ENCODE measurements at regions of chr3 and their contacts with region 1.

Region 1: DNA sequence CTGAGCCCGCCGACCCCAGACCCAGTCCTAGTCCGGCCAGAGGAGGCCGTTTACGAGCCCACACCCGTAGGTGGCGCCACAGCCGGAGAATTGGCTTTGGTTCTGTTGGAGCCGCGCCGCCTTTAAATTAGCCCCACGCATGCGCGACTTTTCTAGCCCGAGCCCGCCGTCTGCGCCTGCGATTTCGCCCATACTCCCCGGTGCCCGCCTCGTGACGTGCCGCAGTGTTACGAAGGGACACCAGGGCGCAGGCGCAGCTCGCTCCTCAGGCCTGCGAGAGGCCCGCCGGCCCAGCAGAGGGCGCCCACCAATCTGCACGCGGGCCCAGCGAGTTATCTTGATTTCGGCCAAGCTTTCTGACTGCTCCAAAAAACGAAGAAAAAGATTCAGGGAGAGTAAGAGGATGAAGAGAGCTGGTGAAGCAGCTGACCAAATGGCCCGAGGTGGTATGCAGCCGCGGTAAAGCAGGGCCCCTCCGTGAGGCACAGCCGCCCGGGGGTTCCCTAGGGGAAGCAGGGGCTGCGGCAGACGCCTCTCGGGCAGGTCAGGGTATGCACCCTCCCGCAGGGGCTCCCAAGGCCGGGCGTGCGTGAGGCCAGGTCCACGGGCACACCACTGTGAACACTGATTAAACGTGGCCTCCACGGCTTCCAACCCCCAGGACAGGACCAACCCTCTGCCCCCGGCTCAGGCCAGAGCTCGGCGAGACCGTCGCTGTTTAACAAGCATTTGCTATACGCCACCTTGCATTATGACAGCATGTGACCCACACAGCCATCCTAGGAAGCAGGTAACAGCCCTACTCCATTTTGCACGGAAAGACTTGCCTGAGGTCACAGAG is 32.8 kb downstream of the RPN1 start:
- DNase-seq: peak; percentile 84 to 99
- H3K4me3 ChIP-seq: peak overlapping the region; percentile 83 to 86
- H3K27ac ChIP-seq: peak overlapping the region; percentile 73 to 80
- H3K4me1 ChIP-seq: peaks cover 6 to 16% of the 10 kb centered on the region in 2 donors
- H3K27me3 ChIP-seq: no peaks in the 10 kb centered on the region
- CTCF ChIP-seq: peak; percentile 94 to 95 (median 94)

Region 2: GRCh38 chr3:127590593-127591477 is 1026.9 kb before region 1 on chr3 and contains the start of gene TPRA1:
- intact Hi-C with region 1: loop called (anchors 10 kb)
- DNase-seq: peak; percentile 82 to 96
- H3K4me3 ChIP-seq: peak within 1 kb of the TSS; percentile 83 to 89
- H3K27ac ChIP-seq: peak within 1 kb of the TSS; percentile 89 to 90
- H3K4me1 ChIP-seq: peaks cover 3 to 18% of the 10 kb centered on the region in 2 donors
- H3K27me3 ChIP-seq: no peaks in the 10 kb centered on the region
- CTCF ChIP-seq: peak in 1 of 3 experiments; percentile 30
- total RNA-seq, gene TPRA1: 87.1 TPM

Region 3: DNA sequence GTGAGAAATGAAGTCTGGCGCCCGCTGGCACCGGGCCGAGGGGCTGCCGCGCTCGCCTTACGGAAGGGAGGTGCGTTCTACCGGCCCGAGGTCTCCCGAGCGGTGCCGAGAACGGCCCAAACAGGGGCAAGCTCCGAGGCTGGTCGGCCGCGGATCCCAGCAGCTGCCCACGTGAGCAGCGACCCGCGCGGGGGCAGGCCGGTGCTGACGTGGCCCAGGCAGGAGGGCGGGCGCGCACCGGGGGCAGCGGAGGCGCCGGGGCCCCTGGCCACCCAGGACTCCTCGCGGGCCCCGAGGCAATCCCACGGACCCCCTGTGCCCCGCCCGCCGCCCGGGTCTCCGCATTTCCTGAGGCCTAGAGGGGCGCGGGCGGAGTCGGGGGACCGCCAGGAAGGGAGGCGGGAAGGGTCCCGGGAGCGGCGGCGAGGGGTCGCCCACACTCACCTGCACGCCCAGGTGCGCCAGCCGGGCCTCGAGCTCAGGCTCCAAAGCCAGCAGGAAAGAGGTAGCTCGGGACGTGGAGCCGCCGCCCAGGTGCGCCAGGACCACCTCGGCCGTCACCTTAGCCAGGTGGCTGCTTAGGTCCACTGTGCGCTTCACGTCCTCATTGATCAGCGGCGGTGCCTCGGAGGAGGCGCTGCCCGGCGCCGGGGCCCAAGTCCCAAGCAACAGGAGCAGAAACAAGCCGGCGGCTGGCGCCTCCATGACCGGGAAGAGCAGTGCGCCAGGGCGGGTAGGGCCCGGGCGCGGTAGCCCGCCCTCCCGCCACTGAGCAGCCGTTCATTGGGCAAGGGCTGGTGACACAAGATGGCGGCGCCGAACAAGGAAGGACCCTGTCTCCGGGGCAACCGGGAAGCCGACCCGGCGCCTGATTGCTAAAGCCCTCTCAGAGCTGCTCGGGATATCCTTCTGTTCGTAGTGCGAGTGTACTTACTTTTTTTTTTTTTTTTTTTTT is 32.6 kb after region 1 on chr3 and contains the start of gene RPN1:
- intact Hi-C with region 1: loop called (anchors 1 kb)
- DNase-seq: peak; percentile 87 to 98
- H3K4me3 ChIP-seq: peak within 1 kb of the TSS; percentile 99 to 100
- H3K27ac ChIP-seq: peak within 1 kb of the TSS; percentile 96 to 99
- H3K4me1 ChIP-seq: peaks cover 0 to 10% of the 10 kb centered on the region in 2 donors
- H3K27me3 ChIP-seq: no peaks in the 10 kb centered on the region
- CTCF ChIP-seq: no peak
- total RNA-seq, gene RPN1: 226 TPM

Region 4: GRCh38 chr3:128794770-128795649 is 177.2 kb after region 1 on chr3:
- intact Hi-C with region 1: loop called (anchors 1 kb)
- DNase-seq: peak in 1 of 2 donors; percentile 75
- H3K4me3 ChIP-seq: no peak overlapping the region
- H3K27ac ChIP-seq: no peak overlapping the region
- H3K4me1 ChIP-seq: peaks cover 0 to 11% of the 10 kb centered on the region in 2 donors
- H3K27me3 ChIP-seq: no peaks in the 10 kb centered on the region
- CTCF ChIP-seq: peak; percentile 58 to 78 (median 68)

Region 5: GRCh38 chr3:128845778-128846485 is 228.2 kb after region 1 on chr3:
- intact Hi-C with region 1: loop called (anchors 2 kb)
- DNase-seq: peak; percentile 32 to 91
- H3K4me3 ChIP-seq: peak overlapping the region; percentile 57 to 66
- H3K27ac ChIP-seq: peak overlapping the region; percentile 35 to 54
- H3K4me1 ChIP-seq: peaks cover 0 to 5% of the 10 kb centered on the region in 2 donors
- H3K27me3 ChIP-seq: no peaks in the 10 kb centered on the region
- CTCF ChIP-seq: peak; percentile 33 to 72 (median 51)

Region 6: DNA sequence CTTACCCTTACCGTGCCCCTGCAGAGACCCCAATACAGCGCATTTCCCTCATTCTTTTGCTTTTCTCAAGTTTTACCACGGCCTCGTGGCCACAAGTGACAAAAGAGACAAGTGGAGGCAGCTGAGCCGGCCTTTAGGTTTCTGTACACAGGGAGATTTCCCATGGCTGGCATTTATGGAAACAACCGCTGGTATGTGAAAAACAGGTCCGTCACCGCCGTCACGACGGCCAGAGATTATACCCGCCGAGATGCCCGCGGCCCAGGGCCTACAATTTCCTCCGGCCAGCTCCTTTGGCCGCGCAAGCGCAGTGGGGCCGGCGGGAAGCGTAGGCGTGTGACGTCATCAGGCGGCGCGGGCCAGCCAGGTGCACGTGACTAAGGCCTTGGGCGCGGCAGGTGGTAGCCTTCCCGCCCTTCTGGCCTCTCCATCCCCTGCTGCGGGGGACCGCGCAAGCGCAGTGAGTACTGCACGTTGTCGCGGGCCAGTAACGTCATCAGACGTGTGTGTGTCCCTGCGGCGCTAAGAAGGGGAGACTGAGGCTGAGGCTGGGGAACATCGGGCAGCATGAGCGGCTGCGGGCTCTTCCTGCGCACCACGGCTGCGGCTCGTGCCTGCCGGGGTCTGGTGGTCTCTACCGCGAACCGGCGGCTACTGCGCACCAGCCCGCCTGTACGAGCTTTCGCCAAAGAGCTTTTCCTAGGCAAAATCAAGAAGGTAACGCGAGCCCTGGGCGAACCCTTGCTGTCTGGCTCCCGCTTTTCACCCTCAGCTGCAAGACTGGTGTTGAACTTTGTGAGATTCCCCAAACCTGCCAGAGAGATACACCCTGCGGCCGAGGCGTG is 261.6 kb after region 1 on chr3 and contains the start of gene ACAD9:
- intact Hi-C with region 1: loop called (anchors 1 kb)
- DNase-seq: peak; percentile 94 to 98
- H3K4me3 ChIP-seq: peak within 1 kb of the TSS; percentile 71 to 86
- H3K27ac ChIP-seq: peak within 1 kb of the TSS; percentile 91 to 95
- H3K4me1 ChIP-seq: peaks cover 17% of the 10 kb centered on the region in 2 donors
- H3K27me3 ChIP-seq: no peaks in the 10 kb centered on the region
- CTCF ChIP-seq: no peak
- total RNA-seq, gene ACAD9: 23.4 TPM

Region 7: GRCh38 chr3:129077222-129077621 is 459.4 kb after region 1 on chr3:
- intact Hi-C with region 1: no loop called
- DNase-seq: no peak
- H3K4me3 ChIP-seq: no peak overlapping the region
- H3K27ac ChIP-seq: peak overlapping the region in 1 of 2 donors; percentile 41
- H3K4me1 ChIP-seq: no peaks in the 10 kb centered on the region
- H3K27me3 ChIP-seq: no peaks in the 10 kb centered on the region
- CTCF ChIP-seq: no peak

Measured in ascending aorta (tissue), 2 donors.